Transverse colon (tissue), 4 donors: ENCODE measurements at regions of chr14 and their contacts with region 1.

Region 1: DNA sequence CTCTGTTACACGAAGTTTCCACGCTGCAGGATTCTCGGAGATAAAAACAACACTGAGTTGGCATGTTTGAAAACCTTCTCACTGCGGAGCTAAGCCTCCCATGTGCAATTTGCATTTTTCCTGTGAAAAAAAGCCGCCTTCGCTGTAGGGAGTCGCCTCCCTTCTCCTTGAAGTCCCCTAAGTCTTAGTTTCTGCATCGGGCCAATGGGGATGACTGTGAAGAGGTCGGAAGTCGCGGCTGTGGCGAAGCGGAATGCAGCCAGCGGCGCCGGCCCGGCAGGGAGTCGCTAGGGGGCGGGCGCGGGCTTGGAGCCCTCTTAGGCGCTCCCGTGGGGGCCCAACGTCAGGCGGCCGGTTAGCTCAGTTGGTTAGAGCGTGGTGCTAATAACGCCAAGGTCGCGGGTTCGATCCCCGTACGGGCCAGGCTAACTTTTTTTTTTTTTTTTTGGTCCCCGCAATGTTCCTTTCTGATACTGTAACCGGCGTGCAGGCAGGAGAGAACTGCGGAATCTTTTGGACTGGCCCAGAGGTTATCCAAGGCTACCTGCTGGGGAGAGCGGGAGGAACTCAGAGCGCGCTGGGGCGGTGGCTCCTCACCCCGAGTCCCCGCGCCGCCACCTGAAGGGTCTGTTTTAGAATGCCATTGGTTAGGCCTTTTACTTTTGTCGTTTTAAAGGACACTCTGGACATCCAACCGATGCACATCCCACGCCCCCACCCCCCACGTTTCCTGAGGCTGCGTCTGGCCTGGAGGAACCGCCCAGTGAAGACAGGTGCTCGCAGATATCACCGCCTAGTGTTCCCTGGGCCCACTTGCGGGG is 2.6 kb upstream of the ZNF839 start:
- DNase-seq: peak; percentile 94
- H3K4me3 ChIP-seq: peak overlapping the region; percentile 17 to 63 (median 40)
- H3K27ac ChIP-seq: peak overlapping the region; percentile 91 to 97 (median 92)
- H3K4me1 ChIP-seq: peaks cover 12 to 55% (median 40%) of the 10 kb centered on the region in 4 donors
- H3K27me3 ChIP-seq: no peaks in the 10 kb centered on the region
- CTCF ChIP-seq: peak; percentile 69 to 93 (median 86)
- EP300 ChIP-seq: no peak
- POLR2A ChIP-seq: no peak

Region 2: GRCh38 chr14:101707068-101707842 is 609.7 kb before region 1 on chr14:
- in situ Hi-C with region 1: loop called in 1 of 4 experiments (anchors 25 kb)
- intact Hi-C with region 1: no loop called
- DNase-seq: peak; percentile 58
- H3K4me3 ChIP-seq: no peak overlapping the region
- H3K27ac ChIP-seq: peak overlapping the region; percentile 68 to 73 (median 68)
- H3K4me1 ChIP-seq: peaks cover 6 to 26% (median 16%) of the 10 kb centered on the region in 4 donors
- H3K27me3 ChIP-seq: peaks cover 4% of the 10 kb centered on the region
- CTCF ChIP-seq: peak; percentile 87 to 95 (median 89)
- EP300 ChIP-seq: no peak
- POLR2A ChIP-seq: no peak

Region 3: GRCh38 chr14:101964297-101965144 is 352.4 kb before region 1 on chr14 and contains the start of gene DYNC1H1:
- in situ Hi-C with region 1: loop called in 1 of 4 experiments (anchors 25 kb)
- intact Hi-C with region 1: no loop called
- DNase-seq: peak; percentile 92
- H3K4me3 ChIP-seq: peak within 1 kb of the TSS; percentile 87 to 99 (median 94)
- H3K27ac ChIP-seq: peak within 1 kb of the TSS; percentile 96 to 99 (median 98)
- H3K4me1 ChIP-seq: peaks cover 8 to 51% (median 29%) of the 10 kb centered on the region in 4 donors
- H3K27me3 ChIP-seq: no peaks in the 10 kb centered on the region
- CTCF ChIP-seq: no peak
- EP300 ChIP-seq: no peak
- POLR2A ChIP-seq: peak; percentile 97
- total RNA-seq, gene DYNC1H1: 471 to 647 (median 482) TPM

Region 4: DNA sequence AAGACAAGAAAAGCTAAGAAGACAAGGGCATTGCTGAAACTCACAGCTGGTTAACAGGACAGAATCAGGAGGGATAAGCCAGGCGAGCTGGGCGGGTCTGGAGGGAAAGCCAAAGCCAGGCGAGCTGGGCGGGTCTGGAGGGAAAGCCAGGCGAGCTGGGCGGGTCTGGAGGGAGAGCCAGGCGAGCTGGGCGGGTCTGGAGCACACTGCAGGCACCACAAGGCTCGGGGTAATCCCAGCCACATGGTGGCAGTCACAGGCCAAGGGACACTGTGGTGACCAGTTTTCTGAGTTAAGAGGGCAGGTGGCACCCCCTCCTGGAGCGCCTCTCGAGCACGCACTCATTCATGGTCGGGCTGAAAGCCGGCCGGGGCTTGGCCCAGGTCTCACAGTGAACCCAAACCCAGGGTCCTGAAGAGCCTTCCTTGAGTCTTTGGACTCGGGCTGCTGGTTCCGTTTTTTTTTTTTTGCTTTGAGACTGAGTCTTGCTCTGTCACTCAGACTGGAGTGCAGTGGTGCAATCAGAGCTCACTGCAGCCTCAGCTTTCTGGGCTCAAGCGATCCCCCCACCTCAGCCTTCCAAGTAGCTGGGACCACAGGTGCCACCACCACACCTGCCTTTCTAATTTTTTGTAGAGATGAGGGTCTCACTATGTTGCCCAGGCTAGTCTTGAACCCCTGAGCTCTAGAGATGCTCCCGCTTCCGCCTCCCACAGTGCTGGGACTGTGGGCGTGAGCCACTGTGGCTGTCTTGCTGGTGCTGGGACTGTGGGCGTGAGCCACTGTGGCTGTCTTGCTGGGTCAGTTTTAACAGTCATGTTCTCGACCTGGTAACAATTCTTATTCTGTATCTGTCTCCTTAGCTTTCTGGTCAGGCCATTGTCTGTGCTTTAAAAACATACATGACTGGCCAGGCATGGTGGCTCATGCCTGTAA is 270.3 kb before region 1 on chr14:
- in situ Hi-C with region 1: loop called in 1 of 4 experiments (anchors 25 kb)
- intact Hi-C with region 1: loop called (anchors 5 kb)
- DNase-seq: peak; percentile 90
- H3K4me3 ChIP-seq: no peak overlapping the region
- H3K27ac ChIP-seq: peak overlapping the region; percentile 24 to 66 (median 54)
- H3K4me1 ChIP-seq: peaks cover 0 to 14% (median 3%) of the 10 kb centered on the region in 4 donors
- H3K27me3 ChIP-seq: no peaks in the 10 kb centered on the region
- CTCF ChIP-seq: peak; percentile 38 to 77 (median 59)
- EP300 ChIP-seq: no peak
- POLR2A ChIP-seq: no peak

Region 5: DNA sequence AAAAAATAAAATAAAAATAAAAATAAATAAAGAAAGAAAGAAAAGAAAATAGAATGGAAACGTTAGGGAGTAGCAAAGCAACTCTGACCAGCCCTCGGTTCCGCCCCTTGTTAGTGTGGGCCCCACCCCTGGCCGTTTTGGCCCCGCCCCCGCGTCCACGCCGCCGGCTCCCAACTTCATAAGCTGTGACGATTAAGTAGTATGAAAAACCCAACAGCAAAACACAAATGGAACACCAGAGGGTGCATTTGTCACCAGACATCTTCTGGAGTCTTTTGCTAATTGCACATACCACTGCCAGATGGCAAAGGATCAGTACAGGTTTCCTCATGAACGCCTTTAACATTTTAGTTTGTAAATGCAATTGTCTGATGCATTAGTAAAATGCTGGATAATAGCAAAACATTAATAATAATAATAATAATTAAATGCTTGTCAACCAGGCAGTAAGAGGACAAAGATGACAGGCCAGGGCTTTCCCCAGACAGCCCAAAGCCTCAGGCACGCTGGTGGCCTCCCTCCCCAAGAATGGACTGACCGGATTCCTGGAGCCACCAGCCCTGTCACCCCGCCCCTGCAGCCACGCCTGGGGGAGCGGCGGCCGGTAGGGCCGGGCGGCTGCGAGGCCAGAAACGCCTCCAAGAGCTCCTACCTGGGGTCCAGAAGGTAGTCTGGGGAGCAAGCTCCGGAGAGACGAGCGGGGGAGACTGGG is 253.7 kb before region 1 on chr14:
- in situ Hi-C with region 1: loop called in 1 of 4 experiments (anchors 25 kb)
- intact Hi-C with region 1: no loop called
- DNase-seq: peak; percentile 90
- H3K4me3 ChIP-seq: peak overlapping the region in 1 of 4 donors; percentile 20
- H3K27ac ChIP-seq: peak overlapping the region; percentile 50 to 69 (median 62)
- H3K4me1 ChIP-seq: peaks cover 4 to 19% (median 8%) of the 10 kb centered on the region in 4 donors
- H3K27me3 ChIP-seq: no peaks in the 10 kb centered on the region
- CTCF ChIP-seq: peak; percentile 21 to 48 (median 35)
- EP300 ChIP-seq: no peak
- POLR2A ChIP-seq: no peak

Region 6: GRCh38 chr14:102235275-102235897 is 81.6 kb before region 1 on chr14:
- in situ Hi-C with region 1: loop called in 2 of 4 experiments (anchors 5 to 10 kb)
- intact Hi-C with region 1: loop called (anchors 2 kb)
- DNase-seq: peak; percentile 87
- H3K4me3 ChIP-seq: no peak overlapping the region
- H3K27ac ChIP-seq: no peak overlapping the region
- H3K4me1 ChIP-seq: peaks cover 0 to 8% (median 3%) of the 10 kb centered on the region in 4 donors
- H3K27me3 ChIP-seq: no peaks in the 10 kb centered on the region
- CTCF ChIP-seq: peak; percentile 82 to 88 (median 84)
- EP300 ChIP-seq: no peak
- POLR2A ChIP-seq: no peak